Activated B cell treated with CpG ODN at 0.5 μM for 24 hours (primary cell): ENCODE measurements at regions of chr15 and their contacts with region 1.

Region 1: GRCh38 chr15:33737687-33738601 is 230.4 kb upstream of the CHRM5 start:
- DNase-seq: no peak
- ATAC-seq: no peak
- H3K4me3 Mint-ChIP-seq: no peak overlapping the region
- H3K27ac Mint-ChIP-seq: no peak overlapping the region
- H3K4me1 Mint-ChIP-seq: peaks cover 3% of the 10 kb centered on the region
- H3K27me3 Mint-ChIP-seq: no peaks in the 10 kb centered on the region
- CTCF ChIP-seq: no peak

Region 2: GRCh38 chr15:33963831-33964664 is 226.1 kb after region 1 on chr15:
- CTCF ChIA-PET with region 1: interaction called, 5 read pairs
- POLR2A ChIA-PET with region 1: no interaction called
- intact Hi-C with region 1: loop called (anchors 5 kb)
- DNase-seq: no peak
- ATAC-seq: no peak
- H3K4me3 Mint-ChIP-seq: no peak overlapping the region
- H3K27ac Mint-ChIP-seq: no peak overlapping the region
- H3K4me1 Mint-ChIP-seq: no peaks in the 10 kb centered on the region
- H3K27me3 Mint-ChIP-seq: no peaks in the 10 kb centered on the region
- CTCF ChIP-seq: no peak